CD8-positive, alpha-beta T cell (primary cell): ENCODE measurements at regions of chr4 and their contacts with region 1.

Region 1: GRCh38 chr4:88889451-88889850 is 167.5 kb downstream of the FAM13A start:
- DNase-seq: no peak
- ATAC-seq: no peak
- H3K4me3 ChIP-seq: no peak overlapping the region
- H3K4me3 Mint-ChIP-seq: no peak overlapping the region
- H3K27ac ChIP-seq: no peak overlapping the region
- H3K27ac Mint-ChIP-seq: no peak overlapping the region
- H3K4me1 ChIP-seq: no peaks in the 10 kb centered on the region
- H3K4me1 Mint-ChIP-seq: no peaks in the 10 kb centered on the region
- H3K27me3 ChIP-seq: no peaks in the 10 kb centered on the region
- H3K27me3 Mint-ChIP-seq: no peaks in the 10 kb centered on the region
- CTCF ChIP-seq: no peak

Region 2: GRCh38 chr4:88275516-88275915 is 613.9 kb before region 1 on chr4:
- CTCF ChIA-PET with region 1: no interaction called
- POLR2A ChIA-PET with region 1: no interaction called
- intact Hi-C with region 1: loop called in 1 of 2 experiments (anchors 5 kb)
- DNase-seq: no peak
- ATAC-seq: no peak
- H3K4me3 ChIP-seq: no peak overlapping the region
- H3K4me3 Mint-ChIP-seq: no peak overlapping the region
- H3K27ac ChIP-seq: no peak overlapping the region
- H3K27ac Mint-ChIP-seq: no peak overlapping the region
- H3K4me1 ChIP-seq: peaks cover 49% of the 10 kb centered on the region
- H3K4me1 Mint-ChIP-seq: peaks cover 56% of the 10 kb centered on the region
- H3K27me3 ChIP-seq: no peaks in the 10 kb centered on the region
- H3K27me3 Mint-ChIP-seq: no peaks in the 10 kb centered on the region
- CTCF ChIP-seq: no peak

Region 3: GRCh38 chr4:88866862-88867550 is 22.4 kb before region 1 on chr4:
- CTCF ChIA-PET with region 1: no interaction called
- POLR2A ChIA-PET with region 1: no interaction called
- intact Hi-C with region 1: no loop called
- DNase-seq: no peak
- ATAC-seq: no peak
- H3K4me3 ChIP-seq: no peak overlapping the region
- H3K4me3 Mint-ChIP-seq: no peak overlapping the region
- H3K27ac ChIP-seq: no peak overlapping the region
- H3K27ac Mint-ChIP-seq: no peak overlapping the region
- H3K4me1 ChIP-seq: no peaks in the 10 kb centered on the region
- H3K4me1 Mint-ChIP-seq: no peaks in the 10 kb centered on the region
- H3K27me3 ChIP-seq: no peaks in the 10 kb centered on the region
- H3K27me3 Mint-ChIP-seq: no peaks in the 10 kb centered on the region
- CTCF ChIP-seq: no peak

Region 4: GRCh38 chr4:89158884-89159503 is 269.5 kb after region 1 on chr4:
- CTCF ChIA-PET with region 1: no interaction called
- POLR2A ChIA-PET with region 1: no interaction called
- intact Hi-C with region 1: no loop called
- DNase-seq: peak in 2 of 9 experiments; percentile 40 to 57
- ATAC-seq: peak; percentile 51
- H3K4me3 ChIP-seq: no peak overlapping the region
- H3K4me3 Mint-ChIP-seq: no peak overlapping the region
- H3K27ac ChIP-seq: no peak overlapping the region
- H3K27ac Mint-ChIP-seq: no peak overlapping the region
- H3K4me1 ChIP-seq: no peaks in the 10 kb centered on the region
- H3K4me1 Mint-ChIP-seq: no peaks in the 10 kb centered on the region
- H3K27me3 ChIP-seq: no peaks in the 10 kb centered on the region
- H3K27me3 Mint-ChIP-seq: peaks cover 6% of the 10 kb centered on the region
- CTCF ChIP-seq: peak; percentile 95